Prostate gland (tissue), 2 donors: ENCODE measurements at regions of chr5 and their contacts with region 1.

Region 1: GRCh38 chr5:95961617-95962474 is at the start of gene ELL2:
- DNase-seq: peak; percentile 99
- H3K4me3 ChIP-seq: peak within 1 kb of the TSS; percentile 96 to 100
- H3K27ac ChIP-seq: peak within 1 kb of the TSS; percentile 97 to 99
- H3K4me1 ChIP-seq: no peaks in the 10 kb centered on the region
- H3K27me3 ChIP-seq: no peaks in the 10 kb centered on the region
- CTCF ChIP-seq: no peak
- POLR2A ChIP-seq: peak; percentile 93
- total RNA-seq, gene ELL2: 80.0 to 104 TPM

Region 2: GRCh38 chr5:95327211-95327610 is 634.6 kb before region 1 on chr5:
- intact Hi-C with region 1: no loop called
- DNase-seq: no peak
- H3K4me3 ChIP-seq: no peak overlapping the region
- H3K27ac ChIP-seq: no peak overlapping the region
- H3K4me1 ChIP-seq: no peaks in the 10 kb centered on the region
- H3K27me3 ChIP-seq: no peaks in the 10 kb centered on the region
- CTCF ChIP-seq: no peak
- POLR2A ChIP-seq: no peak

Region 3: DNA sequence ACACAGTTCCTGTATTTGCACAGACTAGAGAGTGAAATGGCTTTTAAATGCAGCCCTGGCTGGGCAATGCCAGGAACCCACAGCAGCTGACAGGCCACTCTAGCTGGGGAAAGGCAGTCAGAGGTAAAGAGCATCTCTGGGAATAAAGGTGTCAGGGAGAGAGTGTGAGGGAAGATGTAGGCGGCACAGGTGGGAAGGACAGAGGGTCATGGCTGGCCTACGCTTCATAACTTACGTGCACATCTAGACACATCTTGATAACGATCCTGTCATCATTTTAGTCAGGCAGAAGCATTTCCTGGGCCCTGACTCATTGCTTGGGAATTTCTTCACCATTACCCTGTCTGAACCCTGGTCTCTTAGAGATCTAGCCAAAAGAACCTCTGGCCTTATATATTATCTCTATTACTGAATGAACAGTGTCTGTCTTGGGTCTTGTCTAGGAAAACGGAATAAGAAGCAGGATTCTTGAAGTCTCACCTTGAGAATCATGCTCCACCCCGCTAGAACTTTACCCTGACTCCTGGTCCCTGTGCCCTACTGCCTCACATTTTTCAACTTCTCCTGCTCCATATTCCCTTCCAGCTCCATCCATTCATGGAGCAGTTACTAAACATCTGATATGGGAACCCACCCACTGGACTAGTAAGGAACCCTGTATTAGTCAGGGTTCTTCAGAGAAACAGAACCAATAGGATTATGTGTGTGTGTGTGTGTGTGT is 106.2 kb after region 1 on chr5:
- intact Hi-C with region 1: no loop called
- DNase-seq: peak; percentile 16
- H3K4me3 ChIP-seq: no peak overlapping the region
- H3K27ac ChIP-seq: peak overlapping the region in 1 of 2 donors; percentile 15
- H3K4me1 ChIP-seq: no peaks in the 10 kb centered on the region
- H3K27me3 ChIP-seq: no peaks in the 10 kb centered on the region
- CTCF ChIP-seq: no peak
- POLR2A ChIP-seq: no peak

Region 4: GRCh38 chr5:96093890-96094381 is 132.1 kb after region 1 on chr5:
- intact Hi-C with region 1: no loop called
- DNase-seq: no peak
- H3K4me3 ChIP-seq: no peak overlapping the region
- H3K27ac ChIP-seq: peak overlapping the region in 1 of 2 donors; percentile 23
- H3K4me1 ChIP-seq: no peaks in the 10 kb centered on the region
- H3K27me3 ChIP-seq: no peaks in the 10 kb centered on the region
- CTCF ChIP-seq: no peak
- POLR2A ChIP-seq: no peak

Region 5: GRCh38 chr5:96336351-96336985 is 374.6 kb after region 1 on chr5:
- intact Hi-C with region 1: loop called (anchors 2 kb)
- DNase-seq: peak; percentile 85
- H3K4me3 ChIP-seq: no peak overlapping the region
- H3K27ac ChIP-seq: peak overlapping the region; percentile 54 to 73
- H3K4me1 ChIP-seq: peaks cover 27% of the 10 kb centered on the region
- H3K27me3 ChIP-seq: no peaks in the 10 kb centered on the region
- CTCF ChIP-seq: peak; percentile 75 to 95 (median 90)
- POLR2A ChIP-seq: no peak